Activated CD4-positive, alpha-beta memory T cell treated with anti-CD3 and anti-CD28 coated beads, Interleukin-2, amount 10 ng/mL, durations not matched to agents 7 days and 5 days (primary cell): ENCODE measurements at regions of chr6 and their contacts with region 1.

Region 1: DNA sequence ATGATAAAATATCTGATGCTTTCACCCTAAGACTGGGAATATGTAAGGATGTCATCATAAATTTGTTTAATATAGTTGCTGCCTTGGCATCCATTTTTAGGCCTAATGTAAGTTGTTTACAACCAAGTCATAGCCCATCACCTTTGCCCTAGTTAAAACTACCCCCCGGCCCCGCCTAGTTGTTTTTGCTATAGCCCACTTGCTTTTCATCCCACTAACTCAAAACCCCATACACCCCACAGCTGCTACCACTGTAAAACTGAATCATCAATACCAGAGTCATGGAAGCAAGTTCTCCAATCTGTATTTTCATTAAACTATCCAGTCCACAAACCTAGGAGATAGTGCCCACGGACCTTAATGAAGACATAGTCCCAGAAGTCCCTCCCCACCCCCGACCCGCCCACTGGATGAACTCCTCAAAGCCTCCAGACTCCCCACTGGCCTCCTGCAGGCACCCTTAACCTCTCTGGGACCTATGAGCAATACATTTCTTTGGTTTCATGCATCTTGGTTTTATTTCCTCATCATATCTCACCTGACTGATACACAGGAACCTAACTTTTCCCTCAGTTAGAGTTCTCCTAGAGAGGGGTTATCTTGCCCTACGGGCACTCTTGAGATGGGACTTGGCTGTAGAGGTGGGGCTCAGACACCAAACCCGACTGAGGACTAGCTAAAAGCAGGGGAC is 12.5 kb upstream of the ZDHHC14 start:
- DNase-seq: no peak
- H3K4me3 Mint-ChIP-seq: no peak overlapping the region
- H3K27ac Mint-ChIP-seq: no peak overlapping the region
- H3K4me1 Mint-ChIP-seq: peaks cover 14% of the 10 kb centered on the region
- H3K27me3 Mint-ChIP-seq: peaks cover 43% of the 10 kb centered on the region

Region 2: DNA sequence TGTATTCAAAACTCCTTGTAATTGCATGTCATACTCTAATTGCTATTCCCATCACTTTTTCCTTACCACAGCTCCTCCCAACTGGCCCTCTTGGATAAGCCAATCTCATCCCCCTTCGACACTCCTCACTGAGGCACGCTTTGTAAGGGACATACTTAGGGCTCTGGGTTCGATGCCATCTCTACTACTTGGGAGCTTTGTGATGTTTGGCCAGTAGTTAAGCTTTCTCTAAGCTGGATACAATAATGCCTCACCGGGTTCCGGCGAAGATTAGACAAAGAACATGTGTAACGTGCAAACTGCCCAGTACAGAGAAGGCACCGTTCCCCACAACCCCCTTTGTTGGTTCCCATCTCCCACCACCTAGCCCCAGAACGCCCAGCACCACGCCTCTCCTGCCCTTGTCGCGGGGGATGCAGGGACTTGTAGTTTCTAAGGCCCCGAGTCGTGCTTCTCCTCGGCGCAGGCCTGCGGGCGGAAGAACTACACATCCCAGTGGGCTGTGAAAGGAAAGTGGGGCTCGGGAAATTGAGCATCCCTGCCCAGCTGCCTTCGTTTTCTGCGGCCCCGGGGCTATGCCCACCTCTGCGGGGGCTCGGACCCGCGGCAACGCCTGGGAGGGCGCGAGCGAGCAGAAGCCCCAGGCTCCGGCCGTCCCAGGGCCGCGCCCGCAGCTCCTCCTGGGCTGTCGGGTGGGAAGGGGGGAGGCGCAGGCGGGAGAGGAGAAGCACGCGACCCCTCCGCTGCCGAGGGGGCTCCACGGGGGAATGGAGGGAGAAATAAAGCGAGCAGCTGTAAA is 11.4 kb after region 1 on chr6:
- CTCF ChIA-PET with region 1: interaction called, 3 read pairs
- POLR2A ChIA-PET with region 1: interaction called, 17 read pairs
- DNase-seq: peak; percentile 91
- H3K4me3 Mint-ChIP-seq: peak overlapping the region; percentile 67
- H3K27ac Mint-ChIP-seq: peak overlapping the region; percentile 58
- H3K4me1 Mint-ChIP-seq: peaks cover 29% of the 10 kb centered on the region
- H3K27me3 Mint-ChIP-seq: peaks cover 6% of the 10 kb centered on the region